ENCODE measurements at regions of chr13 and their contacts with region 1.

Region 1: GRCh38 chr13:46126552-46127357 is 21.9 kb upstream of the CPB2 start:
- DNase-seq: peak; percentile 85
- H3K4me3 ChIP-seq: no peak overlapping the region
- H3K27ac ChIP-seq: no peak overlapping the region
- H3K4me1 ChIP-seq: peaks cover 22% of the 10 kb centered on the region
- H3K27me3 ChIP-seq: peaks cover 16 to 21% of the 10 kb centered on the region in 2 experiments
- CTCF ChIP-seq: peak; percentile 86 to 97
- POLR2A ChIP-seq: no peak

Region 2: GRCh38 chr13:45511310-45512097 is 615.3 kb before region 1 on chr13:
- CTCF ChIA-PET with region 1: interaction called, 3 read pairs
- POLR2A ChIA-PET with region 1: no interaction called
- dilution Hi-C with region 1: no loop called
- intact Hi-C with region 1: loop called (anchors 2 kb)
- DNase-seq: peak; percentile 83
- H3K4me3 ChIP-seq: no peak overlapping the region
- H3K27ac ChIP-seq: peak overlapping the region; percentile 46
- H3K4me1 ChIP-seq: peaks cover 14% of the 10 kb centered on the region
- H3K27me3 ChIP-seq: no peaks in the 10 kb centered on the region
- CTCF ChIP-seq: peak; percentile 58 to 67
- POLR2A ChIP-seq: no peak

Region 3: DNA sequence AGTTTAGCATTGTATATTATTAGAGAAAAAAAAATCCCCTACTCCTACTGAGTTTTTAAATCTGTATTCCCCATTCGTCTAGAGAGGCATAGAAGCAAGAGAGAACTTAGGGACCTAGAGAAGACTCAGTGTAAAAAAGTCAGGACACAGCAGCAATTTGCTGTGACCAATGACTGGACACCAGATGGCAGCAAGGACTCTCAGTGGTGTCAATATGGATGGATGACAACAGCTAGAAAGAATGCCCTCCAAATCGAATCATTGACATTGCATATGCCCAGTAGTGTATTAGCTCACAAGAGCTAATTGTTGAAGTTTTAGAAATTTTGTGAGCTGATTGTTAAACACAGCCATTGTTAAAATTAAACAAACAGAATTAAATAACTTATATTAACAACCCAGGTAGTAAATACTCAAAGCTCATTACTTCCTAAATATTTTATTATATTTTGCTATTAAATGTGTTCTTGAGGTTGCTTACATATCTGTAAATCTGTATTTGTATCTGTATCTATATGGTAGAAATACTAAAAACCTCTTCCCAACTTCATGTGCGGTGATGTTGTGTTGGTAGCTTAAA is 319.1 kb before region 1 on chr13:
- CTCF ChIA-PET with region 1: interaction called, 110 read pairs
- POLR2A ChIA-PET with region 1: no interaction called
- dilution Hi-C with region 1: no loop called
- intact Hi-C with region 1: loop called (anchors 1 kb)
- DNase-seq: peak; percentile 63
- H3K4me3 ChIP-seq: no peak overlapping the region
- H3K27ac ChIP-seq: no peak overlapping the region
- H3K4me1 ChIP-seq: no peaks in the 10 kb centered on the region
- H3K27me3 ChIP-seq: peaks cover 2 to 4% of the 10 kb centered on the region in 2 experiments
- CTCF ChIP-seq: peak; percentile 53 to 60
- POLR2A ChIP-seq: no peak

Region 4: DNA sequence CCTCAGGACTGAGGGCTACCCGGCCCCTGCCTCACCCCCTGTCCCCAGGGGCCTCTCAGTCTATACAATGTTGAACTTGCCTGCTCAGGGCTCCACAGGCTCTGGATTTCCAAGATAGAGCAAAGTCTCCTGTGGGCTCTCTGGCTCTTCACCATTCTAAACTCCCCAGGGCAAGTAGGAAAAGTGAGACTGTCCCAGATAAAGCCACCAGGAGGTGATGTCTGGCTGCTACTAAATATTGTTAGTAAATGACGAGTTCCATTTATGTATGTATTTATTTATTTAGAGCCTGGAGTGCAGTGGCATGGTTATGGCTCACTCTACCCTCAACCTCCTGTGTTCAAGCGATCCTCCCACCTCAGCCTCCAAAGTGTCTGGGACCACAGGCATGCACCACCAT is 201.6 kb before region 1 on chr13:
- CTCF ChIA-PET with region 1: interaction called, 21 read pairs
- POLR2A ChIA-PET with region 1: no interaction called
- dilution Hi-C with region 1: no loop called
- intact Hi-C with region 1: loop called (anchors 1 kb)
- DNase-seq: peak; percentile 13
- H3K4me3 ChIP-seq: no peak overlapping the region
- H3K27ac ChIP-seq: no peak overlapping the region
- H3K4me1 ChIP-seq: no peaks in the 10 kb centered on the region
- H3K27me3 ChIP-seq: no peaks in the 10 kb centered on the region
- CTCF ChIP-seq: peak; percentile 9 to 11
- POLR2A ChIP-seq: no peak

Region 5: GRCh38 chr13:46137627-46138317 is 11.0 kb after region 1 on chr13:
- CTCF ChIA-PET with region 1: interaction called, 26 read pairs
- POLR2A ChIA-PET with region 1: no interaction called
- dilution Hi-C with region 1: no loop called
- intact Hi-C with region 1: no loop called
- DNase-seq: no peak
- H3K4me3 ChIP-seq: no peak overlapping the region
- H3K27ac ChIP-seq: no peak overlapping the region
- H3K4me1 ChIP-seq: no peaks in the 10 kb centered on the region
- H3K27me3 ChIP-seq: peaks cover 10 to 20% of the 10 kb centered on the region in 2 experiments
- CTCF ChIP-seq: no peak
- POLR2A ChIP-seq: no peak

Region 6: DNA sequence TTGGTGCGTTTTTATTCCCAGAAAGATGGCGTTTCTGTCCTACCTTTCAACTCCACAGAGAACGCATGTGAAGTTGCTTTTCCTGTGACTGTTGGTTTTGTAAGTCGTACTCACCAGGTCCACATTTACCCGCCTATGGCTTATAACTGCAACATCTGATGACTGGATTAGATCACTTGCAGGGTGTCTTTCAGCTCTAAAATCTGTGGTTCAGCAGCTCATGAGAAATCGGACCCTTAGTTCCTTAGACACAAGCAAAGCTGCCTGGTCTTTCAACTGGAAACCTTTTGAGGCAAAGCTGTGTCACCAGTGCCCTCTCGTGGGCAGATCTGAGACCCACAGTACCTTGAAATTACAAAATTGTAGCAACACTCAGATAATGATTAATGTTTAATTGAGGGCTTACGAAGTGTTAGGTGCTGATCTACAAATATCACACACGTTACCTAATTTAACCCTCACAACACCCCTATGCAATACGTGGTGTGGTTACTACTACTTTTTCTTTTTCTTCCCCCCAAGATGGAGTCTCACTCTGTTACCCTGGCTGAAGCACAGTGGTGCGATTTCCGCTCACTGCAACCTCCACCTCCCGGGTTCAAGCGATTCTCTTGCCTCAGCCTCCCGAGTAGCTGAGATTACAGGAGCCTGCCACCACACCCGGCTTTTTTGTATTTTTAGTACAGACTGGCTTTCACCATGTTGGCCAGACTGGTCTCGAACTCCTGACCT is 194.9 kb after region 1 on chr13:
- CTCF ChIA-PET with region 1: interaction called, 15 read pairs
- POLR2A ChIA-PET with region 1: no interaction called
- dilution Hi-C with region 1: no loop called
- intact Hi-C with region 1: no loop called
- DNase-seq: peak; percentile 63
- H3K4me3 ChIP-seq: no peak overlapping the region
- H3K27ac ChIP-seq: no peak overlapping the region
- H3K4me1 ChIP-seq: no peaks in the 10 kb centered on the region
- H3K27me3 ChIP-seq: peaks cover 9 to 12% of the 10 kb centered on the region in 2 experiments
- CTCF ChIP-seq: peak; percentile 68 to 74
- POLR2A ChIP-seq: no peak

Region 7: GRCh38 chr13:46961719-46962118 is 835.0 kb after region 1 on chr13:
- CTCF ChIA-PET with region 1: no interaction called
- POLR2A ChIA-PET with region 1: no interaction called
- dilution Hi-C with region 1: no loop called
- intact Hi-C with region 1: no loop called
- DNase-seq: no peak
- H3K4me3 ChIP-seq: no peak overlapping the region
- H3K27ac ChIP-seq: no peak overlapping the region
- H3K4me1 ChIP-seq: no peaks in the 10 kb centered on the region
- H3K27me3 ChIP-seq: no peaks in the 10 kb centered on the region
- CTCF ChIP-seq: no peak
- POLR2A ChIP-seq: no peak